Activated naive CD4-positive, alpha-beta T cell treated with anti-CD3 and anti-CD28 coated beads, Interleukin-2, amount 10 ng/mL, durations not matched to agents 7 days and 5 days (primary cell): ENCODE measurements at regions of chr14 and their contacts with region 1.

Region 1: DNA sequence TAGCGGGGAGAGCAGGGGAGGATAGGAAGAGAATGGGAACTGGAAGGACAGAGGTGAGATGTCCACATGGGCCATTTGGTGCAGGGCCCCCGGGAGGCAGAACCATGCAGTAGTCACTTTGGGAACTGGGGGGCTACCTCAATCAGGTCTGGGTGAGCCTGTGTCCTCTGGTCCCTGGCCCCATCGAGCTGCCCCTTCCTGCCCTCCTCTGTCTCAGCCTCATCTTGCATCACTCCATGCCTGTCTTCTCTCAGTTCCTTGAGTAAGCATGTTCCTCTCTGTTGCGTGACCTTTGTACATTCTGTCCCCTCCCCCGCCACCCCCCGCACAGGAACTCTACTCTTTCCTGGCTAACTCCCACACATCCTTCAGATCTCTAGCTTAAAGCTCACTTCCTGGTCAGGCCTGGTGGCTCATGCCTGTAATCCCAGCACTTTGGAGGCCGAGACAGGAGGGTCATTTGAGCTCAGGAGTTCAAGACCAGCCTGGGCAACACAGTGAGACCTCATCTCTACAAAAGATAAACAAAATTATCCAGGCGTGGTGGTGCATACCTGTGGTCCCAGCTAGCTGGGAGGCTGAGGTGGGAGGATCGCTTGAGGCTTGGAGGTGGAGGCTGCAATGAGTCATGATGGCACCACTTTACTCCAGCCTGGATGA is 23.2 kb downstream of the FOS start:
- DNase-seq: no peak
- H3K4me3 Mint-ChIP-seq: no peak overlapping the region
- H3K27ac Mint-ChIP-seq: no peak overlapping the region
- H3K4me1 Mint-ChIP-seq: peaks cover 21% of the 10 kb centered on the region
- H3K27me3 Mint-ChIP-seq: peaks cover 9% of the 10 kb centered on the region

Region 2: GRCh38 chr14:75132382-75133086 is 169.3 kb before region 1 on chr14:
- CTCF ChIA-PET with region 1: interaction called, 100 read pairs
- DNase-seq: peak; percentile 58
- H3K4me3 Mint-ChIP-seq: no peak overlapping the region
- H3K27ac Mint-ChIP-seq: no peak overlapping the region
- H3K4me1 Mint-ChIP-seq: peaks cover 22% of the 10 kb centered on the region
- H3K27me3 Mint-ChIP-seq: no peaks in the 10 kb centered on the region

Region 3: DNA sequence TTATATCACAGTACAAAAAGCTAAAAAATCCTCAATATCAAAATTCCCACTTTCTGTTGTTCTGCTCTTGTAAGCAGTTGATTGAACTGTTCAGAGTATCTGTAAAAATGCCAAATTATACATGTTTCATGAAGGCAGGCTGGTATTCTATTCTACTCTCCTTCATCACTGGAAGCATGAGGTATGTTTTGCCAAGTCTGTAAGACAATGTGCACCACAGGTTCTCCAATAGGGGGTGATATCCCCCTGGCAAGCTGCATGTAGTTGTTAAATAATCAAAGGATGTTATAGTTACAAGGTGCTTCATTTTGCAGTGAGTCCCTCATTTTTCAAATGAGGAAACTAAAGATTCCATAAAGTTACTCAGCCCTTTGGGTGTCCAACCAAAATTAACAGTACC is 159.8 kb before region 1 on chr14:
- CTCF ChIA-PET with region 1: interaction called, 22 read pairs
- DNase-seq: peak; percentile 36
- H3K4me3 Mint-ChIP-seq: no peak overlapping the region
- H3K27ac Mint-ChIP-seq: no peak overlapping the region
- H3K4me1 Mint-ChIP-seq: peaks cover 64% of the 10 kb centered on the region
- H3K27me3 Mint-ChIP-seq: no peaks in the 10 kb centered on the region

Region 4: GRCh38 chr14:75252254-75252837 is 49.5 kb before region 1 on chr14:
- CTCF ChIA-PET with region 1: no interaction called
- DNase-seq: no peak
- H3K4me3 Mint-ChIP-seq: no peak overlapping the region
- H3K27ac Mint-ChIP-seq: no peak overlapping the region
- H3K4me1 Mint-ChIP-seq: peaks cover 42% of the 10 kb centered on the region
- H3K27me3 Mint-ChIP-seq: peaks cover 58% of the 10 kb centered on the region

Region 5: GRCh38 chr14:75604856-75605851 is 303.4 kb after region 1 on chr14:
- CTCF ChIA-PET with region 1: no interaction called
- DNase-seq: no peak
- H3K4me3 Mint-ChIP-seq: no peak overlapping the region
- H3K27ac Mint-ChIP-seq: no peak overlapping the region
- H3K4me1 Mint-ChIP-seq: no peaks in the 10 kb centered on the region
- H3K27me3 Mint-ChIP-seq: no peaks in the 10 kb centered on the region